Endothelial cell of umbilical vein (primary cell): ENCODE measurements at regions of chr15 and their contacts with region 1.

Region 1: DNA sequence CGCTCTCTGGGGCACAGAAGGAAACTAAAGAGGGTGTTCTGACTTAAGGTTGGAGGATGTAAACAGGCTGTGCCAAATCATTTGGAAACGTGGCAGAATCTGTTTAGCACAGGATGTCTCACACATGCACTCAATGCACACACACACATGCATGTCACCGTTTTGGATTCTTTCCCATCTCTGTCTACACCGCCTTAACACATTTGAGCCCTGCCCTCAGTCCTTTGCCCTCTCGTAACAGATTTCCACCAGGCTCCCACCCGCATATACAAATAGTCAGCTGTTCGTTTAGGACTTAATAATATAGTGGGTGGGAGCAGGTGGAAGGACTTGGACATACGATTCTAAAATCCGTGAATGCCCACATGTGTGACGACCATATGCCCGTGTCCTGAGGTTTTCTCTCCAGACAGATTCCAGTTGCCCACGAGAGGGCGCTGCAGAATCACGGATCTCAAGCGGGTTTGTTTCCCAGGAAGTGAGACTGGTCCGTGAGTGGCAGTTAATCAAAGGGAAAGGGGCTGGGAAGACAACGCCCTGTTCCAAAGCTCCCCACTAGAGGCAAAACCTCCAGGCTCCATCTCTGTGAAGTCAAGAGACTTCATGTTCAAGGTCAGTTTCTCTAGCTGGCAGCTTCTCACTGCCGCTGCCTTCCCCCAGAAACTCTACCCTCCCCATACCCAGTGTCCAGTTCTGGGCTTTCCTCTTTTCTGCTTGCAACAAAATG is 44.5 kb downstream of the NOX5 start:
- DNase-seq: peak; percentile 78
- H3K4me3 ChIP-seq: no peak overlapping the region
- H3K27ac ChIP-seq: no peak overlapping the region
- H3K4me1 ChIP-seq: peaks cover 12% of the 10 kb centered on the region
- H3K27me3 ChIP-seq: peaks cover 0 to 6% of the 10 kb centered on the region in 2 experiments
- CTCF ChIP-seq: peak; percentile 83 to 94
- POLR2A ChIP-seq: no peak

Region 2: GRCh38 chr15:68817304-68818065 is 241.5 kb before region 1 on chr15:
- CTCF ChIA-PET with region 1: no interaction called
- POLR2A ChIA-PET with region 1: no interaction called
- dilution Hi-C with region 1: no loop called
- intact Hi-C with region 1: no loop called
- DNase-seq: peak; percentile 62
- H3K4me3 ChIP-seq: peak overlapping the region; percentile 92 to 97 (median 93)
- H3K27ac ChIP-seq: peak overlapping the region; percentile 33
- H3K4me1 ChIP-seq: peaks cover 19% of the 10 kb centered on the region
- H3K27me3 ChIP-seq: no peaks in the 10 kb centered on the region
- CTCF ChIP-seq: no peak
- POLR2A ChIP-seq: no peak

Region 3: GRCh38 chr15:68852461-68852860 is 206.5 kb before region 1 on chr15:
- CTCF ChIA-PET with region 1: no interaction called
- POLR2A ChIA-PET with region 1: no interaction called
- dilution Hi-C with region 1: no loop called
- intact Hi-C with region 1: no loop called
- DNase-seq: no peak
- H3K4me3 ChIP-seq: no peak overlapping the region
- H3K27ac ChIP-seq: no peak overlapping the region
- H3K4me1 ChIP-seq: no peaks in the 10 kb centered on the region
- H3K27me3 ChIP-seq: peaks cover 12 to 17% of the 10 kb centered on the region in 2 experiments
- CTCF ChIP-seq: no peak
- POLR2A ChIP-seq: no peak

Region 4: GRCh38 chr15:68910816-68911215 is 148.2 kb before region 1 on chr15:
- CTCF ChIA-PET with region 1: no interaction called
- POLR2A ChIA-PET with region 1: no interaction called
- dilution Hi-C with region 1: no loop called
- intact Hi-C with region 1: no loop called
- DNase-seq: no peak
- H3K4me3 ChIP-seq: no peak overlapping the region
- H3K27ac ChIP-seq: no peak overlapping the region
- H3K4me1 ChIP-seq: no peaks in the 10 kb centered on the region
- H3K27me3 ChIP-seq: peaks cover 9 to 36% of the 10 kb centered on the region in 2 experiments
- CTCF ChIP-seq: no peak
- POLR2A ChIP-seq: no peak

Region 5: DNA sequence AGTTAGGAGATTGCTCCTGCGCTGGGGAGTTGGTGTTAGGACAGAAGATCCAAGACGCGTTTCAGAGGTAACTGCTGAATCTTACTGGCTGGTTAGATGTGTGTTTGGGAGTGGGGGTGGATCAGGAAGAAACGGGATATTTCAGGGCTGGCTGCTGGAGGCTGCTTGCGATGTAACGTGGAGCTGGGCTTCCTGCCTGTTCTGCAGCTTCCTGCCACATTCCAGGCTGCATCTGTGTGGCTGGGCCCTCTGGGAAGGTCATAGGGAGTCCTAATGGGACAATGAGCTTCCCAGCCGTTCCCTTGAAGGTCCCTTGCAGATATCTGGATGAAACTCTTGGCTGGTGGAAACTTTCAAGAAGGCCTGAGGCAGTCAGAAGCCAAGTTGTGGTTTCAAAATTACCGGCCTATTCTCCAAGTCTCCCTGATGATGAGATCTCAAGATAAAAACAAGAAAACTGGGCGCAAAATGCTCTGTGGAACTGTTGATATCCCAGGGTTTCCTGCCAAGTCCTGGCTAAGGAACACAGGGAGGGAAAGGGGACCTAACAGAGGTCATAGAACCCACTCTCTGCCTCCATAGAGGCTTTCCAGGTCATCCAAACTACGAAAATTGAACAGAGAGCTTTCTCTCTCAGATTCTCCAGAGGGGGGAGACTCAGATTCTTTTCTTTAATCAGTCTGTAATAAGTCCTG is 22.5 kb after region 1 on chr15:
- CTCF ChIA-PET with region 1: interaction called, 14 read pairs
- POLR2A ChIA-PET with region 1: no interaction called
- dilution Hi-C with region 1: no loop called
- intact Hi-C with region 1: no loop called
- DNase-seq: peak; percentile 80
- H3K4me3 ChIP-seq: peak overlapping the region in 1 of 3 experiments; percentile 14
- H3K27ac ChIP-seq: peak overlapping the region; percentile 95
- H3K4me1 ChIP-seq: peaks cover 34% of the 10 kb centered on the region
- H3K27me3 ChIP-seq: no peaks in the 10 kb centered on the region
- CTCF ChIP-seq: no peak
- POLR2A ChIP-seq: peak; percentile 37

Region 6: GRCh38 chr15:69154684-69155083 is 95.7 kb after region 1 on chr15:
- CTCF ChIA-PET with region 1: interaction called, 11 read pairs
- POLR2A ChIA-PET with region 1: no interaction called
- dilution Hi-C with region 1: no loop called
- intact Hi-C with region 1: loop called (anchors 2 kb)
- DNase-seq: peak; percentile 96
- H3K4me3 ChIP-seq: no peak overlapping the region
- H3K27ac ChIP-seq: peak overlapping the region; percentile 82
- H3K4me1 ChIP-seq: peaks cover 28% of the 10 kb centered on the region
- H3K27me3 ChIP-seq: no peaks in the 10 kb centered on the region
- CTCF ChIP-seq: no peak
- POLR2A ChIP-seq: peak; percentile 64

Region 7: DNA sequence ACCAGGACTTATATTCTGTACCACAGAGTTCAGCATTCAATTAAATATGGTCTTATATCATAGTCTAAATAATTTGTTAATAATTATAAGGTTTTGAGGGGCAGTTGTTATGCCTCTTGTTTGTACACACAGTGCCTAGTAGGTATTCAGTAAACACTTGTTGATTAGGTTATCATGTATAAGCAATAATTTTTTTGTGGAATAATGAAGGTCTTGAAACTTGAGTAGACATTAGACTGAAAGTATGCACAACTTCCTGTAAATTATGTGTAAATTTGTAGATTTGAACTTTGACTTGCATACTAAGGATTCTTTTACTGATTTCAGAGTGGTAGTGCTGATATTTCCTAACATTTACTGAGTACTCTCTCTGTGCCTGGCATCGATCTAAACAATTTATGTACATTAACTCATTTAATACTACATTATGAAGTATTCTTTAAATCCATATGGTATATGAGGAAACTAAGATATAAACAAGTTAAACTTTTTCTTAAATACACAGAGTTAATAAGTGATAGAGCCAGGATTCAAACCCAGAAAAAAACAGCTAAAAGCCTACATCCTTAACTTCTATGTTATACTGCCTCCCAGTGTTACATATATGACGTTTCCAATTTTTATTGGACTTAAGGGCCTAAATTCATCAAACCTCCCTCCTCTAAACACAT is 166.5 kb after region 1 on chr15:
- CTCF ChIA-PET with region 1: interaction called, 127 read pairs
- POLR2A ChIA-PET with region 1: no interaction called
- dilution Hi-C with region 1: no loop called
- intact Hi-C with region 1: loop called (anchors 1 kb)
- DNase-seq: peak; percentile 62
- H3K4me3 ChIP-seq: no peak overlapping the region
- H3K27ac ChIP-seq: no peak overlapping the region
- H3K4me1 ChIP-seq: peaks cover 2% of the 10 kb centered on the region
- H3K27me3 ChIP-seq: no peaks in the 10 kb centered on the region
- CTCF ChIP-seq: peak; percentile 5 to 18
- POLR2A ChIP-seq: no peak

Region 8: DNA sequence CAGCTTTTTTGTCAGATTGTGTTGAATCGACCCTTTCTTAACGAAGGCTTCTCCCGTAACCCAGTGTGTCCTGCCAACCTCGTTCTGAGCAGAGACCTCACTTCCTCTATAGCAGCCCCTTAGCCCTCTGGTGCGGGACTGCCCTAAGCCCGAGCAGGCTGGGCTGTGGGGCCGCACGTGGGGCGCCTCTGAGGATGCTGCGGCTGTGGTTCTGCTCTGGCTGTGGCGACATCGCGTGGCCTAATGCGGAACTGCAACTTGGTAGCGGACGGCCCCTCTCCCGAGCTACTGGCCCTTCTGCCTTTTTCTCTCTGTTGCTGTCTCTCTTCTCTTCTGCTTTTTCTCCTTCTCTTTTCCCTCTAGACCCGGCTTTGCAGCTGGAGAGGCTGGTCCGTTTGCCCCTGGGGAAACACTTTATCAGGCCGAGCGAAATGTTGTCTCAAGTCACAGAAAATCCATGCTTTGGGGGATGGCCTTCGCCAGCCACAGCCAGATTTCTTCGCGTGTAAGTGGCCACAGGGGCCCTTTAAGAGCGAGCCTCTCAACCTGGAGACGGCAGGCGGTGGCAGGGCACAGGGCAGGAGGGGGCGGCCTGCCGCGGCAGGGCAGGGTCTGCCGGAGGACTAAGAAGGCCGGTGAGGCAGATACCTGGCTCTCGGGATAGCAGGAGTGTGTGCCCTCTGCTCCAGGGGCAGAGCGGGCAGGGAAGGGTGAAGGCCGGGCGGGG is 335.7 kb after region 1 on chr15:
- CTCF ChIA-PET with region 1: interaction called, 40 read pairs
- POLR2A ChIA-PET with region 1: no interaction called
- dilution Hi-C with region 1: no loop called
- intact Hi-C with region 1: loop called (anchors 1 kb)
- DNase-seq: peak; percentile 71
- H3K4me3 ChIP-seq: no peak overlapping the region
- H3K27ac ChIP-seq: no peak overlapping the region
- H3K4me1 ChIP-seq: peaks cover 7% of the 10 kb centered on the region
- H3K27me3 ChIP-seq: no peaks in the 10 kb centered on the region
- CTCF ChIP-seq: peak; percentile 91 to 97
- POLR2A ChIP-seq: no peak

Region 9: GRCh38 chr15:69468241-69469121 is 409.5 kb after region 1 on chr15:
- CTCF ChIA-PET with region 1: no interaction called
- POLR2A ChIA-PET with region 1: no interaction called
- dilution Hi-C with region 1: no loop called
- intact Hi-C with region 1: loop called (anchors 1 kb)
- DNase-seq: no peak
- H3K4me3 ChIP-seq: no peak overlapping the region
- H3K27ac ChIP-seq: no peak overlapping the region
- H3K4me1 ChIP-seq: peaks cover 3% of the 10 kb centered on the region
- H3K27me3 ChIP-seq: no peaks in the 10 kb centered on the region
- CTCF ChIP-seq: no peak
- POLR2A ChIP-seq: no peak